Common myeloid progenitor, CD34-positive (primary cell): ENCODE measurements at regions of chr1 and their contacts with region 1.

Region 1: DNA sequence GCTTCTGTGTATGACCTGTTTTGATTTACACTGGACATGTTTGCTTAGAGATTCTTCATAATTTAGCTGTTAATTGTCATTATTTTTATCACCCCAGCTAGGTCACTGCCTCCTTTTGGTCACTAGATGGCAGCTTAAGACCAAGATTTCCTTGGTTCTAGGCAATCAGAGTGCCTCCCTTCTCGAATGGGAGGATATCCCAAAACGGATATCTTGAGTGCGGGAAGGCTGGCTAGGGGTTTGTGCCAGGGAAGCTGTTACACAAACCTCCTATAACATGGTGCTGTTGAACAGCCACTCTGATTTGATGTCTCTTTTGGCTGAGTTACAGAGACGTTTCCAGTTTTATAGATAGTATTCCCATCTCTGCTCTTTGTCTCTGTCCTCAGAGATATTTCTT is 283.5 kb downstream of the S1PR1 start:
- DNase-seq: peak; percentile 27 to 50 (median 49)
- H3K4me3 ChIP-seq: no peak overlapping the region
- H3K27ac ChIP-seq: no peak overlapping the region
- H3K4me1 ChIP-seq: peaks cover 0 to 5% (median 0%) of the 10 kb centered on the region in 4 experiments
- H3K27me3 ChIP-seq: no peaks in the 10 kb centered on the region

Region 2: GRCh38 chr1:101247404-101248287 is 272.7 kb before region 1 on chr1:
- CTCF ChIA-PET with region 1: no interaction called
- POLR2A ChIA-PET with region 1: no interaction called
- DNase-seq: peak in 1 of 3 donors; percentile 12
- H3K4me3 ChIP-seq: no peak overlapping the region
- H3K27ac ChIP-seq: no peak overlapping the region
- H3K4me1 ChIP-seq: peaks cover 0 to 11% (median 0%) of the 10 kb centered on the region in 4 experiments
- H3K27me3 ChIP-seq: no peaks in the 10 kb centered on the region

Region 3: GRCh38 chr1:101506541-101507164 is 13.6 kb before region 1 on chr1:
- CTCF ChIA-PET with region 1: interaction called, 15 read pairs
- POLR2A ChIA-PET with region 1: no interaction called
- DNase-seq: peak; percentile 34 to 63 (median 47)
- H3K4me3 ChIP-seq: no peak overlapping the region
- H3K27ac ChIP-seq: no peak overlapping the region
- H3K4me1 ChIP-seq: no peaks in the 10 kb centered on the region
- H3K27me3 ChIP-seq: peaks cover 0 to 8% (median 0%) of the 10 kb centered on the region in 5 experiments

Region 4: DNA sequence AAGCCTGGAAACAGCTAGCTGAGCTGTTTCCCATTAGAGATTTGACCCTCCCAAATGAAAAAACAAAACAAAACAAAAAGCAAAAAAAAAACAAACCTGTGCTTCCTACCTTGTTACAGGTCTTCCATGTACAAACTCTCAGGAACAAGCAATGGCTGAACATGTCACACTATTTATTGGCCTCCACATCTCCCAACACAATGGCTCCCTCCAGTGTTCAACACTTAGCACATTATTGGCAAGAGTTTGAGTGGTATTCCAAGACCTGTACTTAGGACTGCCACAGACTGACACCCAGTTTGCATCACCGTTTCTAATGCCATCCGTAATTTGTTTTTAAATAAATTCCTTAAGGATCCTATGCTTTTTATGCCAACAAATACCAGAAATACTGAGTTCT is 671.4 kb after region 1 on chr1:
- CTCF ChIA-PET with region 1: interaction called, 10 read pairs
- POLR2A ChIA-PET with region 1: no interaction called
- DNase-seq: peak; percentile 54 to 73 (median 67)
- H3K4me3 ChIP-seq: no peak overlapping the region
- H3K27ac ChIP-seq: no peak overlapping the region
- H3K4me1 ChIP-seq: no peaks in the 10 kb centered on the region
- H3K27me3 ChIP-seq: no peaks in the 10 kb centered on the region